Astrocyte of the cerebellum (primary cell): ENCODE measurements at regions of chr12 and their contacts with region 1.

Region 1: DNA sequence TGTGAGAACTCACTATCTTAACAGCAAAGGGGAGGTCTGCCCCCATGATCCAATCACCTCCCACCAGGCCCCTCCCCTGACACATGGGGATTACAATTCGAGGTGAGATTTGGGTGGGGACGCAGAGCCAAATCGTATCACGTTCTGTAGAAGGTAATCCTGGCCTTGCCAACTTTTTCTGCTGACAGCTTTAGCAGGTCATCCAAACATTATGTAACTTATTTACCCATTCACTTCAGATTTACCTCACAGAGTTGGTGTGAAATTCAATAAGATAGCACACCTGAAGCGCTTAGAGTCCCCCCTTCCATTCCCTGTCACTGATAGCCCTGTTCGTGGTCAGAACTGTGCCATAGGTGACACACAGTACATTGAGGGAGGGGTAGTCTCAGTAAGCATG is 219.1 kb downstream of the FBXL14 start:
- DNase-seq: no peak
- H3K4me3 ChIP-seq: no peak overlapping the region
- CTCF ChIP-seq: no peak

Region 2: GRCh38 chr12:1418144-1418543 is 42.8 kb after region 1 on chr12:
- in situ Hi-C with region 1: loop called (anchors 5 kb)
- DNase-seq: no peak
- H3K4me3 ChIP-seq: no peak overlapping the region
- CTCF ChIP-seq: no peak

Region 3: DNA sequence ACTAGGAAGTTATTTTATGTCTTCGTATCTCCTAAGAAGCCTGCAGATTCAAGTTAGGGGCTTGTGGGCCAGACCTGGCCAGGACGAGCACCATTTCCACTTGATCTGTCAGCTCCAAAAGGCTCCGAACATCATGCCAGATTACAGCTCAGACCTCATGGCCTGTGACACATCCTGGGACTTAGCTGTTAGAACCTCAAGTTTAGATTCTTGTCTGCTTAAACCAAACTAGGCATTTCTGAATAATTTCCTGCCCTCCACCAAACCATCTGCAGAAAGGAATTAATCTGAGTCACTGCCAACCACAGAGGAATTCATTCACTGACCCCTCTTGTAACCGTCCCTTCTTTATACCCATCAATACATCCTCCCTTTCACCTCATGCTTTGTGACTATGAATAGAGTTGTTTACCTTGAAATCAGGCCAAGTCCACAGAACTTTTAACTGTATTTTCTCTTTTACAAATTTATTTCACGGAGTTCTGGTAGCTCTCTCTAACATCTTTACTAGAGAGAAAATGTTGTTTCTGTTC is 98.8 kb after region 1 on chr12:
- in situ Hi-C with region 1: no loop called
- DNase-seq: peak; percentile 88
- H3K4me3 ChIP-seq: peak overlapping the region; percentile 3
- CTCF ChIP-seq: no peak